Activated T-helper 1 cell treated with anti-CD3 and anti-CD28 coated beads, Interleukin-12 subunit alpha, Interleukin-12 subunit beta, Interleukin-2, Interleukin-4 antibody, amounts not matched to agents 30 ng/mL and 10 ng/mL and 1 ng/mL, durations not matched to agents 14 hours and 24 hours and 36 hours (primary cell): ENCODE measurements at regions of chr17 and their contacts with region 1.

Region 1: GRCh38 chr17:68346448-68346847 is 55.2 kb downstream of the ARSG start:
- DNase-seq: peak; percentile 64
- H3K4me3 Mint-ChIP-seq: peak overlapping the region; percentile 67
- H3K27ac Mint-ChIP-seq: peak overlapping the region; percentile 92
- H3K4me1 Mint-ChIP-seq: peaks cover 72% of the 10 kb centered on the region
- H3K27me3 Mint-ChIP-seq: no peaks in the 10 kb centered on the region

Region 2: DNA sequence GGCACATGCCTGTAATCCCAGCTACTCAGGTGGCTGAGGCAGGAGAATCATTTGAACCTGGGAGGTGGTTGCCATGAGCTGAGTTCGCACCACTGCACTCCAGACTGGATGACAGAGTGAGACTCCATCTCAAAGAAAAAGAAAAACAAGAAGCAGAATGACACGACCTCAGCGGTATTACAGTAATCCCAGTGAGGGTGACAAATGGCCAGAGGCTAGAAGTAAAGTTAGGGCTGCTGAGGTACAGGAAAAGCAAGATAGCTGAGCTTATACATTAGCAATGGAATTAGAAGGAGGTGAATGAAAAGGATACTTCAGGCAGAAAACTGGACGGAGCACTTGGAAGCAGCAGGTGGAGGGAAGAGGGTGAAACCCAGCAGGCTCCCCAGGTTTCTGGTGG is 124.7 kb before region 1 on chr17:
- intact Hi-C with region 1: no loop called
- DNase-seq: no peak
- H3K4me3 Mint-ChIP-seq: no peak overlapping the region
- H3K27ac Mint-ChIP-seq: no peak overlapping the region
- H3K4me1 Mint-ChIP-seq: no peaks in the 10 kb centered on the region
- H3K27me3 Mint-ChIP-seq: no peaks in the 10 kb centered on the region

Region 3: GRCh38 chr17:68238164-68238872 is 108.1 kb before region 1 on chr17:
- intact Hi-C with region 1: loop called (anchors 1 kb)
- DNase-seq: no peak
- H3K4me3 Mint-ChIP-seq: peak overlapping the region; percentile 82
- H3K27ac Mint-ChIP-seq: peak overlapping the region; percentile 95
- H3K4me1 Mint-ChIP-seq: peaks cover 53% of the 10 kb centered on the region
- H3K27me3 Mint-ChIP-seq: no peaks in the 10 kb centered on the region

Region 4: DNA sequence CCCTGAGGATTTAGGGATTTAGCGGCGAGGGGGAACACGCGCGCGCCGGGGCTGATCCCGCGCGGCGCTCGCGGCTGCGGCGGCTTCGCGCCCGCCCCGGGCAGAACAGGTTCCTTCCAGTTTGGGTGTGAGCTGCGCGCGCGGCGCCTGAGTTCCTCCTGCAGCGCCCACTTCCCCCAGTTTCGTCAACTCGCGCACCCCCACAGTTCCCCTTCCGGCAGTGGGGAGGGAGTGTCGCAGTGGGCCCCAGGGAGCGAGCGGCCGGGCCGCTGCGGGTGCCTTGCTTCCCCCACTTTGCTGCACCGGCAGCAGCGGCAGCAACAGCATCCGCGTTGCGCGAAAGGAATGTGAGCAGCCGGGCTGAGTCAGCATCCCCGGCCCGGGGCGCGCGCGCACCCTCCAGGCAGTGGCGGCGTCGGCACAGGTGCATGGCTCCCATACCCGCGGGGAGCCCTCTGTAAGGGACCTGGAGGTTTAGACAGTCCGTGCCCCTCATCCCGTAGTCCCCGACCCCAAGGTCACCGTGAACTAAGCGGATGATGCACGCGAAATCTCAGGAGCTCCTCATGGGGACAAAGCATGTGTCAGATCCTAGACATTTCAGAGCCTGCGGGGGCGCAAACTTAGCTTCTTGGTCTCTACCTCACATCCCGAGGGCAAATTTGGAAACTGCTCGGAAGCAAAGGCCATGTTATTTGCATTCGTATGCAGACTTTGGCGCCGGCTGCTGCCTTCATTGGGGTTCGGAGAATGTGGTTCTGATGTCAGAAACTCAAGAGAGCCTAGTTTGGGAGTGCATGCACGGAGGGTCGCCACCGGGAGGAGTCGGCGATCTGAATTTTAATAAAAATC is 54.4 kb before region 1 on chr17:
- intact Hi-C with region 1: loop called (anchors 1 kb)
- DNase-seq: peak; percentile 90
- H3K4me3 Mint-ChIP-seq: peak overlapping the region; percentile 83
- H3K27ac Mint-ChIP-seq: peak overlapping the region; percentile 84
- H3K4me1 Mint-ChIP-seq: peaks cover 67% of the 10 kb centered on the region
- H3K27me3 Mint-ChIP-seq: peaks cover 8% of the 10 kb centered on the region

Region 5: DNA sequence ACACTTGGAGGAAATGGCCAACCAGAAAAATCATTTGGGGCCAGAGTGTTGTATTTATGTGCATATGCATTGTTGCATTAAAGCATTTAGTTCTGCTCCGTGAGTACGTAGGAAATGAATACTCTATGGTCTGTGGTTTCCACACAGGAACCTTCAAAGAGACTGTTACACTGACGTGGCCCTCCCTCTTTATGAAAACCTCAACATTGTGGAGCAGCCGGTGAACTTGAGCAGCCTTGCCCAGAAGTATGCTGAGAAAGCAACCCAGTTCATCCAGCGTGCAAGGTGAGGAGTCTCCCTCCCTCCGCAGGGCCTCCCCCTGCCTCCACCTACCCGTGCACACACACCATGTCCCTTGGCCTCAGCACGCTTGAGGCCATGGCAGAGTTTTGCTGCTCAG is 10.1 kb after region 1 on chr17:
- intact Hi-C with region 1: loop called (anchors 1 kb)
- DNase-seq: peak; percentile 75
- H3K4me3 Mint-ChIP-seq: peak overlapping the region; percentile 73
- H3K27ac Mint-ChIP-seq: peak overlapping the region; percentile 86
- H3K4me1 Mint-ChIP-seq: peaks cover 61% of the 10 kb centered on the region
- H3K27me3 Mint-ChIP-seq: no peaks in the 10 kb centered on the region

Region 6: GRCh38 chr17:68398691-68399637 is 52.5 kb after region 1 on chr17:
- intact Hi-C with region 1: loop called (anchors 1 kb)
- DNase-seq: peak; percentile 9
- H3K4me3 Mint-ChIP-seq: peak overlapping the region; percentile 49
- H3K27ac Mint-ChIP-seq: peak overlapping the region; percentile 85
- H3K4me1 Mint-ChIP-seq: peaks cover 51% of the 10 kb centered on the region
- H3K27me3 Mint-ChIP-seq: no peaks in the 10 kb centered on the region

Region 7: DNA sequence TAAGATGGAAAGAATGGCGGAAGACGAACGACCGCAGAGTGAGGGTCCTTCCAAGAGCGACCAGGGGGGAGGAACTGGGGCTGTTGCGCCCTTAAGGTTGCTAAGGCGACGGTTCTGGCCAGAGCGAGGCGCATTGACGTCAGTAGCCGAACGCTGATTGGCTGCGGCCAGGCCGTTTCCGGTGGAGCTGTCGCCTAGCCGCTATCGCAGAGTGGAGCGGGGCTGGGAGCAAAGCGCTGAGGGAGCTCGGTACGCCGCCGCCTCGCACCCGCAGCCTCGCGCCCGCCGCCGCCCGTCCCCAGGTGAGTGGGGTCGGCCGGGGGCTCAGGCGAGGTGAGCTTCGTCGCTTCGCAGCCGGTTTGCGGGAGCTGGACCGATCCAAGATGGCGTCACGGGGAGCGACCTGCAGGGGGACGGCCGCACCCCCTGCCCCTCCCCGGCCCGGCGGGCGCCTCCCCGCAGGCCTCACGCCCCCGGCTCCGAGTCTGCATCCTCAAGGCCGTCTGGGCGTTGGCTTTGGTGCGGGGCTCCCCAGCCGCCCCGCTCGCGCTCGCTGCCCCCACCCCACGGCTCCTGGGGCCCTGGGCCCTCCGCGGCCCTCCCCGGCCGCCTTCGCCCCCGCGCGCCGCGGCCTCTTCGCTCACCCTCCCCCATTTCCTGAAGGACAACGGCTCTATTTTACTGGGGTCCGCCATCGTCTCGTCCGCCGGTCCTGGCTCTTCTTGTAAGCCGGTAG is 166.0 kb after region 1 on chr17 and contains the start of gene PRKAR1A:
- intact Hi-C with region 1: loop called (anchors 5 kb)
- DNase-seq: peak; percentile 91
- H3K4me3 Mint-ChIP-seq: peak within 1 kb of the TSS; percentile 97
- H3K27ac Mint-ChIP-seq: peak within 1 kb of the TSS; percentile 99
- H3K4me1 Mint-ChIP-seq: peaks cover 59% of the 10 kb centered on the region
- H3K27me3 Mint-ChIP-seq: no peaks in the 10 kb centered on the region
- total RNA-seq, gene PRKAR1A: 209 and 214 TPM in 2 replicates